Activated CD4-positive, alpha-beta T cell treated with anti-CD3 and anti-CD28 coated beads for 36 hours (primary cell): ENCODE measurements at regions of chr5 and their contacts with region 1.

Region 1: GRCh38 chr5:137754126-137754960 is at the start of gene HNRNPA0:
- DNase-seq: peak; percentile 98
- ATAC-seq: peak; percentile 87
- H3K4me3 Mint-ChIP-seq: peak within 1 kb of the TSS; percentile 77
- H3K27ac Mint-ChIP-seq: peak within 1 kb of the TSS; percentile 97
- H3K4me1 Mint-ChIP-seq: peaks cover 28% of the 10 kb centered on the region
- H3K27me3 Mint-ChIP-seq: no peaks in the 10 kb centered on the region
- total RNA-seq, gene HNRNPA0: 18.9 to 32.1 TPM

Region 2: DNA sequence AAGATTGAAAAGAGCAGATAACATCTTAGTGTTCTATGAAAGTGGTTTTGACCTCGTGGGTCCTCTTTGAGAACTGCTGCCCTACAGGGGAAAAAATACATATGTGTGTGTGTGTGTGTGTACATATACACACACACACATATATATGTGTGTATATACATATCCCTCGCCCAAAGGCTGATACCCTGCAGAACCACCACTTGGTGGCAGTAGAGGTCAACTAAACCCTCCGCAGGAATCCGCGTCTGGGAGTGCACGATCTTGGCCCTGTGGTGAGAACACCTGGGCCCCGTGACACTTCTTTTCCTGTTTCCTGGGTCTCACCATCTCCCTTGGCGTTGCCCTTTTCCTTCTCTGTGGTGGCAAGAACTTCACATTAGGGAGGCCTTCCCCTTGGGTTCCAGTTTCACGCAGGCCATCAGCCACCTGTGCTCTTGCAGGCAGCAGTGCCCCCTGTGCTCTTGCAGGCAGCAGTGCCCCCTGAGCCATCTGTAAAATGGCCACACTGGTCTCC is 1866.9 kb before region 1 on chr5:
- CTCF ChIA-PET with region 1: no interaction called
- POLR2A ChIA-PET with region 1: no interaction called
- intact Hi-C with region 1: no loop called
- DNase-seq: peak; percentile 83
- ATAC-seq: peak; percentile 77
- H3K4me3 Mint-ChIP-seq: no peak overlapping the region
- H3K27ac Mint-ChIP-seq: no peak overlapping the region
- H3K4me1 Mint-ChIP-seq: peaks cover 20% of the 10 kb centered on the region
- H3K27me3 Mint-ChIP-seq: peaks cover 40% of the 10 kb centered on the region

Region 3: GRCh38 chr5:137395008-137395755 is 359.2 kb before region 1 on chr5:
- CTCF ChIA-PET with region 1: no interaction called
- POLR2A ChIA-PET with region 1: no interaction called
- intact Hi-C with region 1: no loop called
- DNase-seq: no peak
- ATAC-seq: no peak
- H3K4me3 Mint-ChIP-seq: no peak overlapping the region
- H3K27ac Mint-ChIP-seq: no peak overlapping the region
- H3K4me1 Mint-ChIP-seq: no peaks in the 10 kb centered on the region
- H3K27me3 Mint-ChIP-seq: peaks cover 16% of the 10 kb centered on the region

Region 4: GRCh38 chr5:137695651-137696428 is 58.5 kb before region 1 on chr5:
- CTCF ChIA-PET with region 1: interaction called, 5 read pairs
- POLR2A ChIA-PET with region 1: no interaction called
- intact Hi-C with region 1: loop called in 1 of 2 experiments (anchors 1 kb)
- DNase-seq: peak; percentile 42
- ATAC-seq: peak; percentile 75
- H3K4me3 Mint-ChIP-seq: peak overlapping the region; percentile 40
- H3K27ac Mint-ChIP-seq: peak overlapping the region; percentile 89
- H3K4me1 Mint-ChIP-seq: peaks cover 51% of the 10 kb centered on the region
- H3K27me3 Mint-ChIP-seq: no peaks in the 10 kb centered on the region

Region 5: GRCh38 chr5:137743031-137743640 is 11.2 kb before region 1 on chr5:
- CTCF ChIA-PET with region 1: interaction called, 35 read pairs
- POLR2A ChIA-PET with region 1: interaction called, 14 read pairs
- intact Hi-C with region 1: no loop called
- DNase-seq: peak; percentile 75
- ATAC-seq: peak; percentile 91
- H3K4me3 Mint-ChIP-seq: no peak overlapping the region
- H3K27ac Mint-ChIP-seq: no peak overlapping the region
- H3K4me1 Mint-ChIP-seq: peaks cover 16% of the 10 kb centered on the region
- H3K27me3 Mint-ChIP-seq: no peaks in the 10 kb centered on the region

Region 6: GRCh38 chr5:137888857-137889759 is 134.8 kb after region 1 on chr5 and contains the start of gene PKD2L2:
- CTCF ChIA-PET with region 1: interaction called, 4 read pairs
- POLR2A ChIA-PET with region 1: interaction called, 3 read pairs
- intact Hi-C with region 1: loop called in 1 of 2 experiments (anchors 1 kb)
- DNase-seq: peak; percentile 93
- ATAC-seq: peak; percentile 99
- H3K4me3 Mint-ChIP-seq: peak within 1 kb of the TSS; percentile 92
- H3K27ac Mint-ChIP-seq: peak within 1 kb of the TSS; percentile 93
- H3K4me1 Mint-ChIP-seq: peaks cover 21% of the 10 kb centered on the region
- H3K27me3 Mint-ChIP-seq: no peaks in the 10 kb centered on the region
- total RNA-seq, gene PKD2L2: 0.30 TPM in 1 of 2 experiments, not detected in the other

Region 7: GRCh38 chr5:138331449-138332368 is 577.4 kb after region 1 on chr5 and contains the start of gene CDC25C:
- CTCF ChIA-PET with region 1: no interaction called
- POLR2A ChIA-PET with region 1: no interaction called
- intact Hi-C with region 1: loop called in 1 of 2 experiments (anchors 10 kb)
- DNase-seq: peak; percentile 98
- ATAC-seq: peak; percentile 100
- H3K4me3 Mint-ChIP-seq: peak within 1 kb of the TSS; percentile 86
- H3K27ac Mint-ChIP-seq: peak within 1 kb of the TSS; percentile 87
- H3K4me1 Mint-ChIP-seq: peaks cover 22% of the 10 kb centered on the region
- H3K27me3 Mint-ChIP-seq: no peaks in the 10 kb centered on the region
- total RNA-seq, gene CDC25C: 15.9 to 19.0 TPM

Region 8: GRCh38 chr5:138352071-138352721 is 597.9 kb after region 1 on chr5 and contains the start of gene KDM3B:
- CTCF ChIA-PET with region 1: no interaction called
- POLR2A ChIA-PET with region 1: no interaction called
- intact Hi-C with region 1: loop called in 1 of 2 experiments (anchors 1 kb)
- DNase-seq: peak; percentile 94
- ATAC-seq: peak; percentile 76
- H3K4me3 Mint-ChIP-seq: peak within 1 kb of the TSS; percentile 99
- H3K27ac Mint-ChIP-seq: peak within 1 kb of the TSS; percentile 96
- H3K4me1 Mint-ChIP-seq: peaks cover 44% of the 10 kb centered on the region
- H3K27me3 Mint-ChIP-seq: no peaks in the 10 kb centered on the region
- total RNA-seq, gene KDM3B: 39.0 to 40.9 TPM